Gastrocnemius medialis (tissue), 4 donors: ENCODE measurements at regions of chr5 and their contacts with region 1.

Region 1: GRCh38 chr5:97162045-97162444 is 19.6 kb upstream of the LIX1 start:
- DNase-seq: peak; percentile 10 to 36
- ATAC-seq: peak; percentile 66 to 86
- H3K4me3 ChIP-seq: no peak overlapping the region
- H3K27ac ChIP-seq: no peak overlapping the region
- H3K4me1 ChIP-seq: no peaks in the 10 kb centered on the region
- H3K27me3 ChIP-seq: no peaks in the 10 kb centered on the region
- CTCF ChIP-seq: peak; percentile 75 to 89 (median 81)
- POLR2A ChIP-seq: no peak

Region 2: DNA sequence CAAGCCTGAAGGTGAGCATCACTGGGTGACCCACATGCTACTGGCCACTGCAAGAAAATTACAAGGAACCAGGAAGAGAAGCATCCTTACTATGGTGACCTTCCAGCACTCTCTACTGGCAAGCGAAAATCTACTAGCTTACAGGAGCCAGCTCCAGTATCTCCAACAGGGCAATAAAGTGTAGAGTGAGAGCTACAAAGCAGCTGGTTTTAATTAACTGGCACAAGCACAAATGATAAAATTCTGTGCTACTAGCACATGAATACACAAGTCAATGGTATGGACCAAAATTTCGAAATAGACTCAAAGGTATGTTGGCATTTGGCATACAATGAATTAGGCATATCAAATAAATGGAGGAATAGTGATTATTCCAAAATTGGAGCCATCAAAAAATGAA is 613.1 kb before region 1 on chr5:
- in situ Hi-C with region 1: no loop called
- intact Hi-C with region 1: no loop called
- DNase-seq: no peak
- ATAC-seq: no peak
- H3K4me3 ChIP-seq: no peak overlapping the region
- H3K27ac ChIP-seq: no peak overlapping the region
- H3K4me1 ChIP-seq: no peaks in the 10 kb centered on the region
- H3K27me3 ChIP-seq: no peaks in the 10 kb centered on the region
- CTCF ChIP-seq: no peak
- POLR2A ChIP-seq: no peak

Region 3: GRCh38 chr5:96614110-96614691 is 547.8 kb before region 1 on chr5:
- in situ Hi-C with region 1: loop called in 2 of 4 experiments (anchors 25 kb)
- intact Hi-C with region 1: loop called (anchors 5 kb)
- DNase-seq: peak; percentile 42 to 57
- ATAC-seq: peak; percentile 97 to 99
- H3K4me3 ChIP-seq: no peak overlapping the region
- H3K27ac ChIP-seq: peak overlapping the region; percentile 46 to 75 (median 60)
- H3K4me1 ChIP-seq: peaks cover 4 to 16% of the 10 kb centered on the region in 2 donors
- H3K27me3 ChIP-seq: no peaks in the 10 kb centered on the region
- CTCF ChIP-seq: peak; percentile 61 to 76 (median 64)
- POLR2A ChIP-seq: no peak

Region 4: GRCh38 chr5:96752341-96753016 is 409.6 kb before region 1 on chr5:
- in situ Hi-C with region 1: loop called (anchors 10 to 25 kb)
- intact Hi-C with region 1: loop called (anchors 2 kb)
- DNase-seq: no peak
- ATAC-seq: no peak
- H3K4me3 ChIP-seq: no peak overlapping the region
- H3K27ac ChIP-seq: peak overlapping the region; percentile 71 to 79 (median 77)
- H3K4me1 ChIP-seq: peaks cover 22 to 25% of the 10 kb centered on the region in 2 donors
- H3K27me3 ChIP-seq: no peaks in the 10 kb centered on the region
- CTCF ChIP-seq: peak; percentile 28 to 74 (median 48)
- POLR2A ChIP-seq: no peak

Region 5: DNA sequence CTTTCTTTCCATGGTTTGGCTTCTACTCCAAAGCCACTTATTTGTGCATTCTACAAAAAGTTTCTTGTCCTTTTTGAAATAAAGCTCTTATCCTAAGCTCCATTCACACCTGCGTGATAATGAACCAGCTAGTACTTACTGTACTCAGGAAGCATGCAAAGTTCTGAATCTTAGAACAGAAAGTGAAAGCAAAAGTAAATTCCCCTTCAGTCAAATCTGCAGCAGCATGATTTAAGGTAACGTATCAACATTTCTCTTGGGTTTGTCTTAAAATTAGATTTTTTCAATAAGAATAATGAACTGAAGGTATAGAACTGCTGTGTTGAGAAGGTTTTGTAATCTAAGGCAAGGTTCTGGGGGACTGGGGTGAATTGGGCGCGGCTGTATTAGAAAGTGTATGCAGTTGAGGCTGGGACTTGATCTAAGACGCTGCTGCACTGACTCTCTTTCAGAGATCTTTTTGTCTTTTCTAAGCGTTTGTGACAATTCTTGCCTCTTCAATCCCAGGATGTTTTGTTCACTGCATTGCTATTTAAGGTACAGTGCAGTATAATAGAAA is 285.7 kb before region 1 on chr5 and contains the start of gene ERAP2:
- in situ Hi-C with region 1: loop called in 3 of 4 experiments (anchors 5 to 10 kb)
- intact Hi-C with region 1: no loop called
- DNase-seq: no peak
- ATAC-seq: peak; percentile 68 to 86
- H3K4me3 ChIP-seq: peak within 1 kb of the TSS; percentile 55 to 75 (median 68)
- H3K27ac ChIP-seq: peak within 1 kb of the TSS; percentile 62 to 79 (median 72)
- H3K4me1 ChIP-seq: peaks cover 9 to 15% of the 10 kb centered on the region in 2 donors
- H3K27me3 ChIP-seq: no peaks in the 10 kb centered on the region
- CTCF ChIP-seq: no peak
- POLR2A ChIP-seq: no peak
- total RNA-seq, gene ERAP2: 1.1 to 8.5 (median 2.9) TPM

Region 6: DNA sequence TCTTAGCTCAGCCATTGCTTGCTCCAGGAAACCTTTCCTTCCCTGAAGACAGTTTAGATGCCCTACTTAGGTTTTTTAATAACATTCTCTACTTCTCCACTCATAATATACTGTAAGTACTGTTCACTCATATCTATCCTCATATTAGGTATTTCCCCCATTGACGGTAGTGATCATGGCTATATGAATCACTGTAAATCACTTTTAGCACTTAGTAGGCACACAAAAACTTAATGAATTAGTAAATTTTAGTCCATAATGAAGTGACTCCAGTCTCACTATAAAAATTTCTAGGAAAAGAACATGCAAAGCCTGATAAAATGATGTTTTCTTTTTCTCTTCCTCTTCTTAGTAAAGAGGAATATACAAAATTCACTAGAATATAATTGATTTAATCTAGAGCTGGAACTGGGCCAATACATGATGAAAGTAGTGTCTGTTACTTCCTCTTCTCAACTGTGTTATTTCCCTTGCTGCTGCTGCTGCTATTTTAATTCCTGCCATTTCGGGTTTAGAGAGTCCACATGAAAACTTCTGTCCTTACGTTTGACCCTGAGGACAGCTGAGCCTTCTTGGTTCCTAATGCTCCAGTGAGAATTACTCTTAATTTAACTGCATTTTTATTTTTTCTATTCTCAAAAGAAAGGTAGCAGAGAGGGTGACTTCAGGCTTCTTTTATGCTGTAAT is 152.7 kb before region 1 on chr5:
- in situ Hi-C with region 1: loop called in 1 of 4 experiments (anchors 10 kb)
- intact Hi-C with region 1: no loop called
- DNase-seq: no peak
- ATAC-seq: peak in 1 of 2 donors; percentile 42
- H3K4me3 ChIP-seq: no peak overlapping the region
- H3K27ac ChIP-seq: no peak overlapping the region
- H3K4me1 ChIP-seq: no peaks in the 10 kb centered on the region
- H3K27me3 ChIP-seq: no peaks in the 10 kb centered on the region
- CTCF ChIP-seq: no peak
- POLR2A ChIP-seq: no peak

Region 7: DNA sequence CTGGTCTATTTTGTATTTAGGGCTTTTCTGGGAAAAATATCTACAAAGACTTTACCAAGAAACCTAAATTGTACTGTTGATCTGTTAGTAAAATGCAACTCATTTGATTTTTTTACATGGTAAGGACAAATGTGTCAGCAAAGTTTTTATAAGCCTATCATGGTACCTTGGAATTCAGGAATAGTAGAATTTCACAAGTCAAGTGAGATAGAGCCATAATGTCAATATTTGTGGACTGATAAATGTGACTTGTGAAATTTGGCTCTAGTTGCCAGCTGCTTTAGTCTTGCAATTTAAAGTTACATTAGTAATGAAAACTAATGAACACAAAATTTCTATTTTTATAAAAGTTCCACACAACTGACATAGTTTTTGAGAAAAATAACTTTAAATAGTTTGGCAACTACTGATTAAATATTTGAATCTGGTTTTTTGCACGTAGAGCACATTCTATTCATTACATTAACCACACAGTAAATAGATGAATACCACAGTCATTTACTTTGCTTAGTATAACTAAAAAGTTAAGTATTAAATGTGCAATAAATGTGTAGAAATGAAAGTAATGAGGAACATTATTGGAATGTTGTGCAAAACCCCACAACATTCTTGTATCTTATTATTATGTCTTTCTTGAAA is 62.2 kb after region 1 on chr5:
- in situ Hi-C with region 1: no loop called
- intact Hi-C with region 1: no loop called
- DNase-seq: no peak
- ATAC-seq: no peak
- H3K4me3 ChIP-seq: no peak overlapping the region
- H3K27ac ChIP-seq: no peak overlapping the region
- H3K4me1 ChIP-seq: no peaks in the 10 kb centered on the region
- H3K27me3 ChIP-seq: no peaks in the 10 kb centered on the region
- CTCF ChIP-seq: no peak
- POLR2A ChIP-seq: no peak

Region 8: GRCh38 chr5:97820146-97820545 is 658.1 kb after region 1 on chr5:
- in situ Hi-C with region 1: no loop called
- intact Hi-C with region 1: no loop called
- DNase-seq: no peak
- ATAC-seq: no peak
- H3K4me3 ChIP-seq: no peak overlapping the region
- H3K27ac ChIP-seq: no peak overlapping the region
- H3K4me1 ChIP-seq: no peaks in the 10 kb centered on the region
- H3K27me3 ChIP-seq: no peaks in the 10 kb centered on the region
- CTCF ChIP-seq: no peak
- POLR2A ChIP-seq: no peak